IMR-90 (cell line): ENCODE measurements at regions of chr10 and their contacts with region 1.

Region 1: DNA sequence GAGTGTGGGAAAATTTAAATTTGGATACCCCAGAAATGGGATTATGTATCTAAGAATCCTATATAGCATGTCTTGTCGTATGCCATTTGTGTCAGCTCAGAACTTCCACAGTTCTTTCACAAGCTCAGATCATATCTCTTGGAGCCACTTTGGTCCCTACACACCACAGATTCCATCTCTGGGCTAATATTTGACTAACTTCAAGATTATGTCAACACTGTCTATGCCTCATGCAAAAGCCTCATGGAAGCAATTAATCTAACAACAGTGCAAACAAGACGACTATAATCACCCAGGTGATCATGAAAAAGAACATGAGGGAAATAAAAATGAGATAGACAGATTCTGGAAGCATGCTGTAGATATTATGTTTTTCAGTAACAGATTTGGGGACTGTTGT is 189.1 kb downstream of the LRRTM3 start:
- DNase-seq: no peak
- ATAC-seq: no peak
- H3K4me3 ChIP-seq: no peak overlapping the region
- H3K27ac ChIP-seq: no peak overlapping the region
- H3K4me1 ChIP-seq: no peaks in the 10 kb centered on the region
- H3K27me3 ChIP-seq: no peaks in the 10 kb centered on the region
- CTCF ChIP-seq: no peak
- POLR2A ChIP-seq: no peak
- RAD21 ChIP-seq: no peak

Region 2: GRCh38 chr10:67140641-67141040 is 25.7 kb after region 1 on chr10:
- CTCF ChIA-PET with region 1: no interaction called
- POLR2A ChIA-PET with region 1: no interaction called
- dilution Hi-C with region 1: no loop called
- in situ Hi-C with region 1: no loop called
- intact Hi-C with region 1: no loop called
- DNase-seq: no peak
- ATAC-seq: no peak
- H3K4me3 ChIP-seq: no peak overlapping the region
- H3K27ac ChIP-seq: no peak overlapping the region
- H3K4me1 ChIP-seq: no peaks in the 10 kb centered on the region
- H3K27me3 ChIP-seq: no peaks in the 10 kb centered on the region
- CTCF ChIP-seq: no peak
- POLR2A ChIP-seq: no peak
- RAD21 ChIP-seq: no peak

Region 3: GRCh38 chr10:67151471-67151870 is 36.5 kb after region 1 on chr10:
- CTCF ChIA-PET with region 1: no interaction called
- POLR2A ChIA-PET with region 1: no interaction called
- dilution Hi-C with region 1: no loop called
- in situ Hi-C with region 1: no loop called
- intact Hi-C with region 1: loop called (anchors 1 kb)
- DNase-seq: no peak
- ATAC-seq: no peak
- H3K4me3 ChIP-seq: no peak overlapping the region
- H3K27ac ChIP-seq: no peak overlapping the region
- H3K4me1 ChIP-seq: no peaks in the 10 kb centered on the region
- H3K27me3 ChIP-seq: no peaks in the 10 kb centered on the region
- CTCF ChIP-seq: no peak
- POLR2A ChIP-seq: no peak
- RAD21 ChIP-seq: no peak